Activated T-helper 1 cell treated with anti-CD3 and anti-CD28 coated beads, Interleukin-12 subunit alpha, Interleukin-12 subunit beta, Interleukin-2, Interleukin-4 antibody, amounts not matched to agents 30 ng/mL and 10 ng/mL and 1 ng/mL, durations not matched to agents 14 hours and 24 hours and 36 hours (primary cell): ENCODE measurements at regions of chr13 and their contacts with region 1.

Region 1: GRCh38 chr13:99087096-99087953 is 109.5 kb upstream of the DOCK9 start:
- DNase-seq: peak; percentile 93
- H3K4me3 Mint-ChIP-seq: peak overlapping the region; percentile 97
- H3K27ac Mint-ChIP-seq: peak overlapping the region; percentile 98
- H3K4me1 Mint-ChIP-seq: peaks cover 39% of the 10 kb centered on the region
- H3K27me3 Mint-ChIP-seq: peaks cover 2% of the 10 kb centered on the region

Region 2: DNA sequence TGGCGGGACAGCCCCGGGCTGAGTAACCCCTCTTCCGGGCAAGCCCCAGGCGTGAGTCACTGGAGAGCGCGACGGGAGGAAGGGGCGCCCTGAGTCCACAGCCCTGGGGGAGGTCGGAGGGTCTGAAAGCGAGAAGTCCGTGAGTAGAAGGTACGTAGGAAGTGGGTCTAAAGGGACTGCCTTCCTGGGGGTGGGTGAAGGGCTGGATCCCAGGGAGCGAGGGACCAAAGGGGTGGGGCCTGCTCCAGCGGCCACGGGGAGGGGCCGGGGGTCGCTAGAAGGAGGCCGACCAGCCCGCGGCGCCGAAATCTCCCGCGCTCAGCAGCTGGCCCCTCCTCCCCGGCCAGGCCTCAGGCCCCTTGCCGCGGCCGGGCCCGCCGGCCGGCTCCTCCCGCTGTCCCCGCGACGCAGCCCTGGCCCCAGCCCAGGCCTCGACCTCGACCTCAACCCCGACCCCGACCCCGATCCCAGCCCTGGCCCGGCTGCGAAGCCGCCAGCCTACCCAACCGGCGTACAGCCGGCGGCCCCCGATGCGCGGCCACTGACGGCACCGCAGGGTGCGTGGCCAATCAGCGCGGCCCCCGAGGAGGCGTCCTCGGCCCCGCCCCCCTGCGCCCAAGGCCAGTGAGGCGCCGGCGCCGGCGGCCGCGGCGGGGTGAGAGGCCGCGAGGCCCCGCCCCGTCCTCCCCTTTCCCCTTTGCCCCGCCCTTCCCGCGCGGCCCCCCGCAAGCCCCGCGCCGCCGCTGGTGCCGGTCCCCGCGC is 1111.3 kb before region 1 on chr13:
- intact Hi-C with region 1: loop called (anchors 1 kb)
- DNase-seq: peak; percentile 88
- H3K4me3 Mint-ChIP-seq: peak overlapping the region; percentile 93
- H3K27ac Mint-ChIP-seq: peak overlapping the region; percentile 98
- H3K4me1 Mint-ChIP-seq: peaks cover 33% of the 10 kb centered on the region
- H3K27me3 Mint-ChIP-seq: peaks cover 13% of the 10 kb centered on the region

Region 3: DNA sequence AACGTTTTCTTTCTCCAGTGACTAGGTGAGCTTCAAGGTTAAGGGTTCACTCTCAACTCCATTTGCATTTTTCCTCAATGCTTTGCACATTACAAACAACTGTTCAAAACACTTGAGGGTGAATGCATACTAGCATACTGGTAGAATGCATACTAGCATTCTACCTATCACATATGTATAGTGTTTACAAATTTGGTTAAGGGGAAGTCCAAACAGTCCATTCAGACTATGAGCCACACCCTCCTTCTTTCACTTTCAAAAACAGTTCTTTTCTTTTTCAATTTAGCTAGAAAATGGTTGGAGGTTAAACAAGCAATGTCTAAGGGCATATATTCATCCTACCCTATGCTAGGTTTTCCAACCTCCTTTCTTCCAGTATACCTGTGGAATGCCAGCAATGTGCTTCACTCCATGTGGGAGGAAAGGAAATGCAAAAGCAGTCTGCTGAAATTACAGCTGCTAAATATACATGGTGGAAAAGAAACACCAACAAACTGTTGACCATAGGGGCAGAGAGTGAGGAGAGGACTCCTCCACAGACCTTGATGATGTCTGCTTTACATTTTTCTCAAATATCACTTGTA is 212.1 kb before region 1 on chr13:
- intact Hi-C with region 1: loop called (anchors 1 kb)
- DNase-seq: no peak
- H3K4me3 Mint-ChIP-seq: peak overlapping the region; percentile 64
- H3K27ac Mint-ChIP-seq: peak overlapping the region; percentile 92
- H3K4me1 Mint-ChIP-seq: peaks cover 62% of the 10 kb centered on the region
- H3K27me3 Mint-ChIP-seq: no peaks in the 10 kb centered on the region

Region 4: DNA sequence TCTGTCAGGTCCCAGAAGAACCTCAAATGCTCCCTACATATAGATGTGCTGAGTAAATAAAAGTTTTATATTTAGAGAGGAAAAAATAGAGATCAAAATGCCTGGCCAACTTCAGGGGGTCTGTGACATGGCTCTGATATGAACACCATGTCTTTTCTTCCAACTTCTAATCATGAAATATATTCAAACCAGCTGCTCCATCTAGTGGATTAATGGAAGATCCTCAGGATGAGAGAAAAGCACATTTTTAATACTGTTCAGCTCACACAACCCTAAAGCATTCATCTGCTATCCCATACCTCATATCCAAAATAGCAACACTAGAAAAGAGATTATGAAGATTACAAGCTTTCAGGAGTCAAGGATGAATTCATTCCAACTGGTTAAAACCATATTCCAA is 53.5 kb before region 1 on chr13:
- intact Hi-C with region 1: loop called (anchors 5 kb)
- DNase-seq: no peak
- H3K4me3 Mint-ChIP-seq: no peak overlapping the region
- H3K27ac Mint-ChIP-seq: no peak overlapping the region
- H3K4me1 Mint-ChIP-seq: peaks cover 23% of the 10 kb centered on the region
- H3K27me3 Mint-ChIP-seq: no peaks in the 10 kb centered on the region

Region 5: DNA sequence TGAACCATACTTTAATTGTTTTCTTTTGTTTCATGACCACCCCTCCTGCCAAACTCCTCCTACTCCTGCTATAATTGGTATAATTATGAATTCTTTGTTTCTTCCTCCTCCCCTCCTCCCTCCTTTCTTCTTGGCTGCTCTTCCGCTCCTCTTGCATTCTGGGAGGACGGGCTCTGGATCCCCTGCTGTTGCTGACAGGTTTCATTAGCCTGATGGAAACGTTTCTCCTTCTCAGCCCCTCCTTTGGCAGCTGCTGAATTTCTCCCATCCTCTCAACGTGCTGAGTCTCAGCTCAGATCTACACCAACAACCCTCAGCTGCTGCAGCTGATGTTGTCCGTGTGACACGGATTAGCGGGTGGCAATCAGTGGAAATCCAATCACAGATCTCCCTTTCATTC is 16.2 kb after region 1 on chr13:
- intact Hi-C with region 1: no loop called
- DNase-seq: no peak
- H3K4me3 Mint-ChIP-seq: no peak overlapping the region
- H3K27ac Mint-ChIP-seq: no peak overlapping the region
- H3K4me1 Mint-ChIP-seq: peaks cover 11% of the 10 kb centered on the region
- H3K27me3 Mint-ChIP-seq: peaks cover 14% of the 10 kb centered on the region

Region 6: GRCh38 chr13:99124794-99125316 is 37.5 kb after region 1 on chr13:
- intact Hi-C with region 1: loop called (anchors 2 kb)
- DNase-seq: no peak
- H3K4me3 Mint-ChIP-seq: peak overlapping the region; percentile 19
- H3K27ac Mint-ChIP-seq: peak overlapping the region; percentile 31
- H3K4me1 Mint-ChIP-seq: peaks cover 21% of the 10 kb centered on the region
- H3K27me3 Mint-ChIP-seq: peaks cover 2% of the 10 kb centered on the region

Region 7: DNA sequence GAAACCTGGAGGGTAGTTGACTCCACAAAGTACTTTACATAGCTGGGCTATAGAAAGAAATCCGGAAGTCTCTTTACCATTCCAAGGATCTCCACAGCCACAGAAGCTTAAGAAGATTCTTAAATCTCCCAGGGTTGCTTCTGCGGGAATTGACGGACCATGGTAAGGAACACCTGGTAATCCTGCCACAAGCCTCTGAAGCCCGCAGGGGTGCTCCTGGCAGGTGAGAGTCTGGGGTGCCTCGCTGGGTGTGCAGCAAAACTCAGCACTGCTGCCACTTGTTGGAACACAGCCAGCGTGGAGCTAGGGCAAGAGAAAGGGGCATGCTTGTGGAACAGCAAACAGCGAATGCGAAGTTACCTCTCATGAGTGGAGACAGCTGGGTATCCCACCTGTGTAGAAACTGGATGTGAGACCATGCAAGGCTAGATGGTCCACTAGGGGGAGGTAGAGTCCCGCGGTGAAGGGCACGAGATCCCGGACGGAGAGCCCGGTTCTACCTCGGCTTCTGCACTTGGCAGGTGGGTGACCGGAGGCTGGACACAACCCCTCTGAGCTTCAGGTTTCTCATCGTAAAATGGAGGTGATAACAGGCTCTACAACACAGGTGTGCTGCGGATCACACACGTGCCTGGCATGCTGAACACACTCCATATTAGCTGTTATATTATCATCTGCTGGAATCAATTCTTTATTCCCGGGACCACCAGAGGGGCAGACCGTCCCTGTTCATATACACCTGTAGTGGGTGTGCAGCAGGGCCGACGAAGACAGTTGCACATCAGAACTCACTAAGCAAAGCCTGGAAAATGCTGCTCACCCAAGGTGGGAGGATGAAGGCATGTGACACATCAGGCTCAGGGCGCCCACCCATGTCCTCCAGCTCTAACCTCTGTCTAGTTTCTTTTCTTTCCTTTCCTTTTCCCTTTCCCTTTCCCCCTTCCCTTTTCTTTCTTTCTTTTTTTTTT is 89.3 kb after region 1 on chr13:
- intact Hi-C with region 1: no loop called
- DNase-seq: peak; percentile 59
- H3K4me3 Mint-ChIP-seq: peak overlapping the region; percentile 40
- H3K27ac Mint-ChIP-seq: no peak overlapping the region
- H3K4me1 Mint-ChIP-seq: peaks cover 24% of the 10 kb centered on the region
- H3K27me3 Mint-ChIP-seq: peaks cover 17% of the 10 kb centered on the region

Region 8: DNA sequence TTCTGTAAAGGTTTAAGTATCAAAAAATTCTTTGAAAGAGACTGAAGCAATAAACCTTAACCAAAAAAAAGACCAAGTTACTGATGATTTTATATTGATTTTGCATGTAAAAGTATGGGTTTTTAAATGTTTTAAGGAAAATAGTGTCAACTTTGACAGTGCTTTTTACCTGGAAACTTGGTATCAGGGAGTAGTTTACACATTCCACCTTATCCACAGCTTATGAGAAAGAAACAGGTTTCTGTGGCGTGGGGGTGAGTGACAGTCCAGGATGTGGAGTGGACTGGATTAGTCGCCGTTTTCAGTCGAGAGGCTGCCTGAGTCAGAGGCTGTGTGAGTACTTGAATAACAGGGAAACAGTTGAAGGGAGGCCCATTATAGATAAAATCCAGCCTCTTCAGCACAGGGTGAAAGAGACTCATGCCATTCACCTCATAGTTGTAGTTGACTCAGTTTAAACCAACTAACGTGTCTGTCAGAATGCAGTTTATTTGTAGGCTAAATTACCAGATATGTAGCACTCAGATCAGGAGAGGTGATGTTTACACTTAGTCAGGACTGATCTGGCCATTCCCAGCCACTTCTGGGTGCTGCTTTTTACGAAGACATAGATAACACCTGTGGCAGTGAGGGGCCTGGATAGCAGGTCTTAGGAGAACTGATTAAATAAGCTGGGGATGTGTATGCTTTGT is 220.5 kb after region 1 on chr13:
- intact Hi-C with region 1: loop called (anchors 5 kb)
- DNase-seq: peak; percentile 42
- H3K4me3 Mint-ChIP-seq: peak overlapping the region; percentile 83
- H3K27ac Mint-ChIP-seq: peak overlapping the region; percentile 87
- H3K4me1 Mint-ChIP-seq: peaks cover 88% of the 10 kb centered on the region
- H3K27me3 Mint-ChIP-seq: no peaks in the 10 kb centered on the region

Region 9: DNA sequence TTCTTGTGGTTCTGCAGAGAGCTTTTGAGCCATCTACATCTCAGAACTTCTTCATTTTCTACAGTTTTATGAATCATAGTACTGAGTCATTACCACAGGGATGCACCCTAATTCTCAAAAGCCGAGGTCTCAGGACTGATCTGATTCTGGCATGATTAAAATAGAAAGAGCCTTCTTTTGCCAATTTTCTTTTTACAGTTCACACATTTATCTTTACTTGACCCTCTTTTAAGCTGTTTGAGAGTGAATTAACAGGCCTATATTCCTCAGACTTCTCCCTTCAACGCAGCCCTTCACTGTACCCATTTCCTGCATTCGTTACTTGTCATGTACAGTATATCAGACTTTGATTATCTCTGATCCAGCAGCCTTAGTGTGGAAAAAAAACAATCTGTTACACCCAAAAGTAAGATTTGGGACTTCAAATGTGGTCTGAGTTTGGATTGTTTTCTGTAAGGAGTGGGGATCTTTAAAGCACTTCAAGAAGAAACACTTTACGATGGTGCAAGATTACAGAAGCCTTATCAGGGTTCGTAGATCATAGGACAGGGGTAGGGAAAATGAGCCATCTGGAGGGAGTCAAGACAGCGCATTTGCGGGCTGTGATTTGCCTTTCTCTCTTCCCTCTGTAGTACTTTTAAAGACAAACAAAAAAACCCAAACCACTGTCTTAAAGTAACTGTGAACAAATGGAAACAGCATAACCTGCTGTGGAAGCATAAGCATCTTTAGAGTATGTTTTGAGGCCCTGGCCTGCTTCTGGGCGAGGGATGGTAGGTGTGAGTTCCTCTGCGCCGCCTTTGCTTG is 235.2 kb after region 1 on chr13:
- intact Hi-C with region 1: no loop called
- DNase-seq: no peak
- H3K4me3 Mint-ChIP-seq: peak overlapping the region; percentile 38
- H3K27ac Mint-ChIP-seq: peak overlapping the region; percentile 96
- H3K4me1 Mint-ChIP-seq: peaks cover 68% of the 10 kb centered on the region
- H3K27me3 Mint-ChIP-seq: no peaks in the 10 kb centered on the region

Region 10: GRCh38 chr13:99606324-99607066 is 519.2 kb after region 1 on chr13:
- intact Hi-C with region 1: loop called (anchors 5 kb)
- DNase-seq: peak; percentile 82
- H3K4me3 Mint-ChIP-seq: peak within 1 kb of the TSS; percentile 89
- H3K27ac Mint-ChIP-seq: peak within 1 kb of the TSS; percentile 81
- H3K4me1 Mint-ChIP-seq: peaks cover 29% of the 10 kb centered on the region
- H3K27me3 Mint-ChIP-seq: peaks cover 4% of the 10 kb centered on the region